Panc1 (cell line): ENCODE measurements at regions of chr13 and their contacts with region 1.

Region 1: DNA sequence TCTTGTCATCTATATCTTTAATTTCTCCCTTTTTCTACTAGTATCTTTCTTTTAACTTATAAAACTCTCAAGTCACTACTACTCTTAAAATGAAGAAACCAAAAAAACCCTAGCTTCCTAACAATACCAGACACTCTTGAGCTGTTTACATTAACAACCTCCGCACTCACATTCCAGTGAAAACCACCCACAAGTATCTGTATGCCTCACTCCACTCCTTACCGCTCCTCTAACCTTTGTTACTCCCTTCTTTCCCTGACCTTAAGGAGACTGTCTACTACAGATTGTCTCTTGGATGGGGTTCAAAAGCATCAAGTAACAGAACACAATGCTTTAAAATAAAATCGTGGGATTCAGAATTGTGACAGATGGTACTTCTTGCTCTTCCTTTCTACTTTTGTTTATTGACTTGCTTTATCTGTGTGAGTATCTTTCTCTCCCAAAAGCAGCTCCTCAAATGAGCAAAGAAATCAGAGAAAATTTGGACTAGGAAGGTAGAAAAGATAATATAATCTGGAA is 110.0 kb upstream of the FBXL3 start:
- DNase-seq: no peak
- ATAC-seq: no peak
- H3K4me3 ChIP-seq: no peak overlapping the region
- H3K27ac ChIP-seq: no peak overlapping the region
- H3K4me1 ChIP-seq: no peaks in the 10 kb centered on the region
- H3K27me3 ChIP-seq: no peaks in the 10 kb centered on the region
- CTCF ChIP-seq: no peak

Region 2: GRCh38 chr13:76225815-76226489 is 911.0 kb before region 1 on chr13:
- CTCF ChIA-PET with region 1: no interaction called
- POLR2A ChIA-PET with region 1: no interaction called
- in situ Hi-C with region 1: no loop called
- intact Hi-C with region 1: no loop called
- DNase-seq: no peak
- ATAC-seq: no peak
- H3K4me3 ChIP-seq: no peak overlapping the region
- H3K27ac ChIP-seq: no peak overlapping the region
- H3K4me1 ChIP-seq: no peaks in the 10 kb centered on the region
- H3K27me3 ChIP-seq: no peaks in the 10 kb centered on the region
- CTCF ChIP-seq: no peak

Region 3: GRCh38 chr13:76937281-76937820 is 199.6 kb before region 1 on chr13:
- CTCF ChIA-PET with region 1: no interaction called
- POLR2A ChIA-PET with region 1: no interaction called
- in situ Hi-C with region 1: no loop called
- intact Hi-C with region 1: no loop called
- DNase-seq: no peak
- ATAC-seq: no peak
- H3K4me3 ChIP-seq: no peak overlapping the region
- H3K27ac ChIP-seq: no peak overlapping the region
- H3K4me1 ChIP-seq: no peaks in the 10 kb centered on the region
- H3K27me3 ChIP-seq: no peaks in the 10 kb centered on the region
- CTCF ChIP-seq: no peak

Region 4: GRCh38 chr13:77009011-77009410 is 128.0 kb before region 1 on chr13:
- CTCF ChIA-PET with region 1: no interaction called
- POLR2A ChIA-PET with region 1: interaction called, 11 read pairs
- in situ Hi-C with region 1: no loop called
- intact Hi-C with region 1: no loop called
- DNase-seq: no peak
- ATAC-seq: no peak
- H3K4me3 ChIP-seq: no peak overlapping the region
- H3K27ac ChIP-seq: no peak overlapping the region
- H3K4me1 ChIP-seq: no peaks in the 10 kb centered on the region
- H3K27me3 ChIP-seq: no peaks in the 10 kb centered on the region
- CTCF ChIP-seq: no peak

Region 5: GRCh38 chr13:77207943-77208342 is 71.0 kb after region 1 on chr13:
- CTCF ChIA-PET with region 1: no interaction called
- POLR2A ChIA-PET with region 1: no interaction called
- in situ Hi-C with region 1: no loop called
- intact Hi-C with region 1: no loop called
- DNase-seq: no peak
- ATAC-seq: no peak
- H3K4me3 ChIP-seq: no peak overlapping the region
- H3K27ac ChIP-seq: no peak overlapping the region
- H3K4me1 ChIP-seq: no peaks in the 10 kb centered on the region
- H3K27me3 ChIP-seq: no peaks in the 10 kb centered on the region
- CTCF ChIP-seq: no peak

Region 6: DNA sequence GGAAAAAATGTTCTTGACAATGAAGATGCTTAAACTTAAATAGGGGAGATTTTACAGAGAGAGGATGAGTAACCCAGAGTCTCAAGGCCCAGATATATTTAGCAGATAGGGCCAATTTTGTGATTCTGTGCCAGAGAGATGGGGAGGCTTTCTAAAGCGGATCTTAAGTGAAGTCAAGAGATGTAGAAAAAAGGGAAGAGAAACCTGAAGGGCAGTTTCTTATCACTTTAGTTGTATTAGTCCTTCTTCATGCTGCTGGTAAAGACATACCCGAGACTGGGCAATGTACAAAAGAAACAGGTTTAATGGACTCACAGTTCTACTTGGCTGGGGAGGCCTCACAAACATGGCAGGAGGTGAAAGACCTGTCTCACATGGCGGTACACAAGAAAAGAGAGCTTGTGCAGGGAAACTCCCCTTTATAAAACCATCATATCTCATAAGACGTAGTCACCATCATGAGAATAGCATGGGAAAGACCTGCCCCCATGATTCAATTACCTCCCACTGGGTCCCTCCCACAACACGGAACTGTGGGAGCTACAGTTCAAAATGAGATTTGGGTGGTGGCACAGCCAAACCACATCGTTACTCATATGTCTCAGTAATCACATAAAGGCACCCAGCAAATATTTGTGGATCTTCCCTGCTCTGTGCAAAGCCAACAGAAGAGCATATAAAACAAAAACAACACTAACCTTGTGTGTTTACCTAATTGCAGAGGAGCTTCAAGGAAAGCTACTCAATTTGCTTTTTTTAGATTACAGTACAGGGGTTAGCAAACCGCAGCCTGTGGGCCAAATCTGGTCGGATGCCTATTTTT is 292.6 kb after region 1 on chr13:
- CTCF ChIA-PET with region 1: no interaction called
- POLR2A ChIA-PET with region 1: no interaction called
- in situ Hi-C with region 1: no loop called
- intact Hi-C with region 1: no loop called
- DNase-seq: no peak
- ATAC-seq: no peak
- H3K4me3 ChIP-seq: no peak overlapping the region
- H3K27ac ChIP-seq: no peak overlapping the region
- H3K4me1 ChIP-seq: no peaks in the 10 kb centered on the region
- H3K27me3 ChIP-seq: no peaks in the 10 kb centered on the region
- CTCF ChIP-seq: no peak